Dorsolateral prefrontal cortex (tissue), 120 donors: ENCODE measurements at regions of chr7 and their contacts with region 1.

Region 1: GRCh38 chr7:141654551-141654950 is 47.4 kb downstream of the DENND11 start:
- DNase-seq: peak; percentile 34 to 85 (median 69)
- H3K4me3 ChIP-seq: peak overlapping the region in 1 of 59 donors; percentile 1
- H3K27ac ChIP-seq: peak overlapping the region in 44 of 59 donors; percentile 3 to 75 (median 44)
- H3K27me3 ChIP-seq: no peaks in the 10 kb centered on the region
- CTCF ChIP-seq: peak; percentile 47 to 92 (median 84)

Region 2: GRCh38 chr7:140810830-140811556 is 843.6 kb before region 1 on chr7:
- intact Hi-C with region 1: loop called (anchors 5 to 10 kb)
- DNase-seq: peak in 4 of 10 donors; percentile 47 to 69 (median 58)
- H3K4me3 ChIP-seq: no peak overlapping the region
- H3K27ac ChIP-seq: no peak overlapping the region
- H3K27me3 ChIP-seq: no peaks in the 10 kb centered on the region
- CTCF ChIP-seq: peak; percentile 54 to 87 (median 80)

Region 3: DNA sequence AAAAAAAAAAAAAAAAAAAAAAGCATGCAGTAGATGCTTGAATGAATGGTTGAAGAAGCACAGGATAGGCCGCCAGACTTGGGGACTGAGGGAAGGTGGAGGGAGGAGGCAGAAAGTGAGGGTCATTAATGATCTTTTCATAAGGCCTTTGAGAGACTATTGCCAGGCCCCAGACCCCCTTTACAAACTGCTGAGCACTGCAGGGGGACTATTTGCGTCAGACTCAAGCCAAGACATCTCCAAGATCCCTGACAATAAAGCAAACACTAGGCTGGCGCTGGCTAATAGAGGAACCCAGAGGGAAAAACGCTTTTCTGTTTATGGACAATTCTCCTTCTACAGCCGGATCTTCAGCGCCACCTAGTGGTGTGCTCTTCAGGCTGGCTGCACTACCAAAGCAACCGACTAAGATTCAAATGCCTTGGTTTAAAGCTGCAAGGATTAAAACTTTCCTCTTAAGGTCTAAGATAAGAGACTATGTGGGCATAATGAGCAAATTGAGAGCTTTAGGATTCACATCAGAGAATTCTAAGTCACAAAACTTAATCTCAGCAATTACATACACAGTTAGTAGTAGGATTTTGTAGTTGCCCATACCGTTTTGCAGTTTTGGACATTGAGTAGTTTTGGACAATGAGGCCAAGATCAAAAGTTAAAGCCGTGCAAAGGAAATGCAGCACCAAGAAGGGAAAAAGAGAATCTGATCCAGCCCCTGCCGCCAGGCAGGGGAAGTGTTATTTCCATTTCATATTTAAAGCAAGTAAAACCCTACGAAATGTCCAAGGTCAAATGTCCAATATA is 121.2 kb before region 1 on chr7:
- intact Hi-C with region 1: loop called (anchors 5 kb)
- DNase-seq: peak; percentile 49 to 80 (median 66)
- H3K4me3 ChIP-seq: peak overlapping the region in 15 of 59 donors; percentile 1 to 48 (median 21)
- H3K27ac ChIP-seq: peak overlapping the region in 26 of 59 donors; percentile 16 to 76 (median 50)
- H3K27me3 ChIP-seq: no peaks in the 10 kb centered on the region
- CTCF ChIP-seq: peak; percentile 85 to 99 (median 97)

Region 4: DNA sequence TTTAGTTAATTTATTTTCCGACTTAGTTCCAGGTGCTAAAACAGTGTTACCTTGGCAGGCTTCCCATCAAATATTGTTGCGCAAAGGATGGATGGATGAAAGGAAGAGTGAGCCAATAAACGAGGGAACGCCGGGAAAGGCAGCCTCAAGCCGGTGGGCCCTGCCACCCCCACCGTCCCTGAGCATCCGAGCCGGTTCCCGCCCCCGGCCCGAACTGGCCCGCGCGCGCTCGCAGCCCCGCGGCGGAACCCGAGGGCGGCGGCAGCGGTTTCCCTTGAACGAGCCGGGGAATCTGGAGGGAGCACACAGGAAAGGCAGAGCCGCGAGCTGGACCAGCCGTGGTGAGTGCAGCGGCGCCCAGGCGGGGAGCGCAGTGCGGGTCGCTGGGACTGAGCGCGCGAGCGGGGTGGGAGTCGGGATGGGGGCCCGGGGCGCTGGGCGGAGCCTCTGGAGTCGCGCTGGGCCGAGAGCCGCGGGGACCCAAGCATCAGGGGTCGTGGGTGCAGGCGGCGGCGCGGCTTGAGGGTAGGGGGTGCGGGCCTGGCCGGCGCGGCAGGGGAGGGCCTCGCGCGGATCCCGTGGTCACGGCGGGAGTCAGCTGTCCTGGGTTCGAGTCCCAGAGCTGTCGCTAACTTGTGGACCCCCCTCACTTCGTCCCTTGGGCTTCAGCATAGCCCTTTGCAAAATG is 103.3 kb before region 1 on chr7 and contains the start of gene AGK:
- intact Hi-C with region 1: loop called in 1 of 2 experiments (anchors 10 kb)
- DNase-seq: peak; percentile 54 to 87 (median 69)
- H3K4me3 ChIP-seq: peak within 1 kb of the TSS; percentile 62 to 98 (median 89)
- H3K27ac ChIP-seq: peak within 1 kb of the TSS in 58 of 59 donors; percentile 17 to 91 (median 68)
- H3K27me3 ChIP-seq: no peaks in the 10 kb centered on the region
- CTCF ChIP-seq: peak in 40 of 56 donors; percentile 7 to 60 (median 26)
- total RNA-seq, gene AGK: 33.6 to 74.7 (median 51.5) TPM

Region 5: GRCh38 chr7:141701489-141702046 is 47.0 kb after region 1 on chr7:
- intact Hi-C with region 1: loop called in 1 of 2 experiments (anchors 5 kb)
- DNase-seq: peak in 5 of 10 donors; percentile 31 to 62 (median 44)
- H3K4me3 ChIP-seq: peak overlapping the region; percentile 33 to 88 (median 76)
- H3K27ac ChIP-seq: peak overlapping the region in 57 of 59 donors; percentile 43 to 98 (median 92)
- H3K27me3 ChIP-seq: no peaks in the 10 kb centered on the region
- CTCF ChIP-seq: peak in 1 of 56 donors; percentile 9

Region 6: DNA sequence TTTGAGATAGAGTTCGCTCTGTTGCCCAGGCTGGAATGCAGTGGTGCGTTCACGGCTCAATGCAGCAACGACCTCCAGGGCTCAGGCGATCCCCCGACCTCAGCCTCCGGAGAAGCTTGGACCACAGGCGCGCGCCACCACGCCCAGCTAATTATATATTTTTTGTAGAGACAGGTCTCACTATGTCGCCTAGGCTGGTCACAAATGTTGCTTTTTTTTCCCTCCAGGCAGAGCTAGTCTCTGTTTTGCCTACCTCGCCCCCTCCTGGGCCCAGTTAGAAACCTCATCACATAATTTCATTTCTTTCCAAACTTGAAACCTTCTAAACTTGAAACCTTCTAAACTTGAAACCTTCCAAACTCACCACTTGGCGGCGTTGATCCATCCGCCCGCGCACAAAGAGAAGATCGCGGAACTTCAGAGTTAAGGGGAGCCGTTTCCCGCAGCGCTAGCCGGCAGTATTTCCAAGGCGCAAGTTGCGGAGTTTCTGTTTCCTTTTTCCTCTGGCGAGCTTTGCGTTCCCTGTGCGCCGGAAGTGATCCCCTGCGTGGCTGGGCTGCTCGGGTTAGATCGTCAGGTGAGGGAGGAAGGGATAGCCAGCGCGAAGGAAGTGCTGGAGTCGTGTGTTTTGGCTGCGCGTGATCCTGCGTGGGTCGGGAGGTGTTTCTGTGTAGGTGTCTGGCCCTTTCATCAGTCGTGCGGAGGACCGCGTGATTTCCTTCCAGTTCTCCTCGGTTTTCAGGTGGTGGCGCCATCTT is 83.5 kb after region 1 on chr7 and contains the start of gene SSBP1:
- intact Hi-C with region 1: loop called (anchors 2 kb)
- DNase-seq: peak; percentile 77 to 93 (median 90)
- H3K4me3 ChIP-seq: peak within 1 kb of the TSS; percentile 57 to 96 (median 81)
- H3K27ac ChIP-seq: peak within 1 kb of the TSS; percentile 5 to 90 (median 80)
- H3K27me3 ChIP-seq: no peaks in the 10 kb centered on the region
- CTCF ChIP-seq: peak; percentile 70 to 94 (median 85)
- total RNA-seq, gene SSBP1: 49.9 to 96.9 (median 80.2) TPM

Region 7: DNA sequence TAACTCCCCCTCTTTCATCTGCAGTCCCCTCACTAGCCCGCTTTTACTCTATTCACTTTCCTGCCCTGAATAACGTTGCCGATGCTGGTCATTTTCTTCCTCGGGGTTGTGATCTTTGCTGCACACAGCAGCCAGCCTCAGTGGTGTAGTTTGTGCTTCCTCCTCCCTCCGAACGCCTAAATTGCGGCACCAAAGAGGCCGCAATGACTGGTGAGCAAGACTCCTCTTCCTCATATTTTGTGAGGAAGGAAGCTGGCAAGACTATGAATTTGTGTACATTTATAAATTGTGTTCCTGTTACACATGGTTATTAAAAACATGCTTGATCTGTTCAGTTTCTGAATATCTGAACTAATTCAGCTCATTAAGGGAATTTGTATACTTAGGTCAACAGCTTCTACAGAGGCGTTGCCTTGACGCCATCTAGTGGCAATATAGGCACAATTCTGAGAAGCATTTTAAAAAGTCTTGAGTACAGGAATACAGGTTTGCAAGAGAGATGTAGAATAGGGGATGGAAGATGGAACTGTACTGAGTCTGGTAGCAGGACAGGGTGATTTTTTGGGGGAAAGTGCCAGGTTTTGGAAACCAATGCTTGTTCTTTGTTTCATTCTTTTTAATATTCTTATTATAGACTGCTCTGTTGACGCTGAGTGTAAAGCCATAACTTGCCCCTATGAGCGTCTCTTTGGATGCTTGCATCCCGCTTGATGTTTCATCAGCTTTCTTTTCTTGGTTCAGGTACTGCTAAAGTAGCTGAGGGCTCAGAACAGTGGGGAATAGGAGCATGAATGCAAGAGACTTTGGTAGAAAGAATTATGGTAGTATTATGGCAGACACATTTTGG is 131.4 kb after region 1 on chr7:
- intact Hi-C with region 1: loop called (anchors 5 to 10 kb)
- DNase-seq: peak in 3 of 10 donors; percentile 5 to 44 (median 24)
- H3K4me3 ChIP-seq: no peak overlapping the region
- H3K27ac ChIP-seq: no peak overlapping the region
- H3K27me3 ChIP-seq: no peaks in the 10 kb centered on the region
- CTCF ChIP-seq: peak; percentile 45 to 82 (median 70)